CD4-positive, alpha-beta T cell (primary cell): ENCODE measurements at regions of chr11 and their contacts with region 1.

Region 1: DNA sequence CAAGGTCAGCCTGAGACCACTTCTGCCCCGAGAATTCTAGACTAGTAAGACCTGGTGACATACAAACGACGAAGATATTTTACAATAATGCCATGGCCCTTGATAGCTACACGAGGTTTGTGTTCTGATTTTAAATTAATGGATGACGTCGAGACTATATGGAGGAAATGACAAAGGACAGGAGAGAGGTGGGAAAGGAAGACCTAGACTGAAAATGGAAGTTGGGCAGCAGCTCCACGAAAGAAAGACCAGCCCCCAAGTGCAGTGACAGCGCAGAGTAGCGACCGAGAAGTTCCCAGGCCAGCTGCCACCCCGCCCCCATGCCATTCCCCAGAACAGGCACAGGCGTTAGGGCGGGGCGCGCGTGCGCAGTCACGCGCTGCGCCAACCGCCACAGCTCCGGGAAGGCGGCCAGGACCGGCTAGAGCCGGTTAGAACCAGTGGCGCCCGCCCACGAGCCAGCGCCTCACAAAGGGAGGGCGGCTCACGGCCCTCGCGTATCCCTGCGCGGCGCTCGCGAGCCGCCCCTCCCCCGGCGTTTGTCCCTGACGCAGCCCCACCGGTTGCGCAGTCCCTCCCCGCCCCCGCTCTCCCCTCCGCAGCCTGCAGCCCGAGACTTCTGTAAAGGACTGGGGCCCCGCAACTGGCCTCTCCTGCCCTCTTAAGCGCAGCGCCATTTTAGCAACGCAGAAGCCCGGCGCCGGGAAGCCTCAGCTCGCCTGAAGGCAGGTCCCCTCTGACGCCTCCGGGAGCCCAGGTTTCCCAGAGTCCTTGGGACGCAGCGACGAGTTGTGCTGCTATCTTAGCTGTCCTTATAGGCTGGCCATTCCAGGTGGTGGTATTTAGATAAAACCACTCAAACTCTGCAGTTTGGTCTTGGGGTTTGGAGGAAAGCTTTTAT is 1.5 kb upstream of the MALAT1 start:
- DNase-seq: peak; percentile 95 to 99 (median 98)
- ATAC-seq: peak; percentile 78
- H3K4me3 ChIP-seq: peak overlapping the region; percentile 73
- H3K4me3 Mint-ChIP-seq: no peak overlapping the region
- H3K27ac ChIP-seq: peak overlapping the region; percentile 96 to 99
- H3K27ac Mint-ChIP-seq: no peak overlapping the region
- H3K4me1 ChIP-seq: peaks cover 33% of the 10 kb centered on the region
- H3K4me1 Mint-ChIP-seq: peaks cover 28% of the 10 kb centered on the region
- H3K27me3 ChIP-seq: no peaks in the 10 kb centered on the region
- H3K27me3 Mint-ChIP-seq: no peaks in the 10 kb centered on the region
- CTCF ChIP-seq: no peak

Region 2: GRCh38 chr11:65134386-65135253 is 362.8 kb before region 1 on chr11 and contains the start of gene SYVN1:
- CTCF ChIA-PET with region 1: no interaction called
- POLR2A ChIA-PET with region 1: interaction called, 28 read pairs
- intact Hi-C with region 1: no loop called
- DNase-seq: peak; percentile 86 to 96 (median 90)
- ATAC-seq: peak; percentile 88
- H3K4me3 ChIP-seq: peak within 1 kb of the TSS; percentile 83
- H3K4me3 Mint-ChIP-seq: peak within 1 kb of the TSS; percentile 99
- H3K27ac ChIP-seq: peak within 1 kb of the TSS; percentile 96 to 99
- H3K27ac Mint-ChIP-seq: peak within 1 kb of the TSS; percentile 100
- H3K4me1 ChIP-seq: peaks cover 47% of the 10 kb centered on the region
- H3K4me1 Mint-ChIP-seq: peaks cover 45% of the 10 kb centered on the region
- H3K27me3 ChIP-seq: no peaks in the 10 kb centered on the region
- H3K27me3 Mint-ChIP-seq: no peaks in the 10 kb centered on the region
- CTCF ChIP-seq: no peak
- total RNA-seq, gene SYVN1: 89.1 to 96.8 TPM

Region 3: DNA sequence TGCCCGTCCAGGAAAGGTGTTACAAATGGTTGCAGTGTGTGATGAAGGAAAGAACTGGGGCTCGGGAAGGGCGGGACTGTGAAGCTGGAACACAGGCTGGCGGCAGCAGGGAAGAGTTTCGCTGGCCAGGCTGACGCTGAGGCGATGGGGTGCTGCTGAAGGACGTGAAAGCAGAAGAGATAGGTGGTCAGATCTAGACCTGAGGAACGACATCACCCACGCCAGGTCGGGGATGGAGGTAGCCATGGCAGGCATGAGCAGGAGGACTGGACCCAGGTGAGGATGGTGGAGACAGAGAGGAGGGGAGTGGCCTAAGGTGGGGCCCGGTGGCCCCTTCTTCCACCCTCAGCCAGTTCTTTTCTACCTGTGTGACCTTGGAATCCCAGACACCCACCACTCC is 173.6 kb before region 1 on chr11:
- CTCF ChIA-PET with region 1: no interaction called
- POLR2A ChIA-PET with region 1: no interaction called
- intact Hi-C with region 1: no loop called
- DNase-seq: no peak
- ATAC-seq: no peak
- H3K4me3 ChIP-seq: no peak overlapping the region
- H3K4me3 Mint-ChIP-seq: no peak overlapping the region
- H3K27ac ChIP-seq: no peak overlapping the region
- H3K27ac Mint-ChIP-seq: no peak overlapping the region
- H3K4me1 ChIP-seq: no peaks in the 10 kb centered on the region
- H3K4me1 Mint-ChIP-seq: no peaks in the 10 kb centered on the region
- H3K27me3 ChIP-seq: peaks cover 0 to 4% of the 10 kb centered on the region in 2 experiments
- H3K27me3 Mint-ChIP-seq: peaks cover 3% of the 10 kb centered on the region
- CTCF ChIP-seq: no peak

Region 4: DNA sequence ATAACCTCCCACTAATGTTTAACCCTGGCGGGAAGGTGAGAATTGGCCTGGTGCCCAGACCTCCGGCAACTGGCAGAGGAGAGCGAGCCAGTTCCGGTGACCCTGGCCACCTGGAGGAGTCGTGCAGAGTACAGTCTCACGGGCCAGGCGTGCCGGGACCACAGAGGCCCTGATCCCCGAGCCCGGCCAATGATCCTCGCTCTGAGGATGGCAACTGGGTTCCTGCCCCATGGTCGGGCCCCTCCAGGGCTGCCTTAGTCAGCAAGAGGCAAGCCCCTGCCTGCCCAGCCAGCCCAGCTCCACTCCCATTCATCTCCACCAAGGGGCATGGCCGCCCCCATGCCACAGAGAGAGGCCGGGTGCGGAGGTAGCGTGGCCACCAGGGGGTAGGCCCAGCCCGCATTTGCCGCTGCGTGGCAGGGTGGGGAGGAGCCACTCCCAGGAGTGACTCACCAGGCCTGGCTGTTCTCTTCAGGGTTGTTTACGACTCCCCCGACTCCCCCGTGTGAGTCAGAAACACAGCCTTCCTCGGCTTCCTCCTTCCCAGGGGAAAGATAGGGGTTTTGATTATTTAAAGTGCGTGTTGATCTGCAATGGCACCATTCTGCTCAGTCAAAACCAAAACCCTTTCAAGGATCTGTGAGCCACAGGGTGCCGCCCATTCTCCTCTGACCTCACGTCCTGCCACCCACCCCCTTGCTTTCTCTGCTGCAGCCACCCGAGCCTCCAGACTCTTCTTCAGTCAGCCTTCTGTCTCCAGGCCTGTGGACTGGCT is 115.2 kb before region 1 on chr11 and contains the start of gene SLC25A45:
- CTCF ChIA-PET with region 1: interaction called, 14 read pairs
- POLR2A ChIA-PET with region 1: interaction called, 350 read pairs
- intact Hi-C with region 1: no loop called
- DNase-seq: peak; percentile 84 to 96 (median 92)
- ATAC-seq: peak; percentile 83
- H3K4me3 ChIP-seq: peak within 1 kb of the TSS; percentile 76
- H3K4me3 Mint-ChIP-seq: peak within 1 kb of the TSS; percentile 86
- H3K27ac ChIP-seq: peak within 1 kb of the TSS; percentile 94 to 95
- H3K27ac Mint-ChIP-seq: peak within 1 kb of the TSS; percentile 98
- H3K4me1 ChIP-seq: peaks cover 74% of the 10 kb centered on the region
- H3K4me1 Mint-ChIP-seq: peaks cover 57% of the 10 kb centered on the region
- H3K27me3 ChIP-seq: no peaks in the 10 kb centered on the region
- H3K27me3 Mint-ChIP-seq: no peaks in the 10 kb centered on the region
- CTCF ChIP-seq: peak; percentile 81
- total RNA-seq, gene SLC25A45: 40.0 to 40.8 TPM

Region 5: DNA sequence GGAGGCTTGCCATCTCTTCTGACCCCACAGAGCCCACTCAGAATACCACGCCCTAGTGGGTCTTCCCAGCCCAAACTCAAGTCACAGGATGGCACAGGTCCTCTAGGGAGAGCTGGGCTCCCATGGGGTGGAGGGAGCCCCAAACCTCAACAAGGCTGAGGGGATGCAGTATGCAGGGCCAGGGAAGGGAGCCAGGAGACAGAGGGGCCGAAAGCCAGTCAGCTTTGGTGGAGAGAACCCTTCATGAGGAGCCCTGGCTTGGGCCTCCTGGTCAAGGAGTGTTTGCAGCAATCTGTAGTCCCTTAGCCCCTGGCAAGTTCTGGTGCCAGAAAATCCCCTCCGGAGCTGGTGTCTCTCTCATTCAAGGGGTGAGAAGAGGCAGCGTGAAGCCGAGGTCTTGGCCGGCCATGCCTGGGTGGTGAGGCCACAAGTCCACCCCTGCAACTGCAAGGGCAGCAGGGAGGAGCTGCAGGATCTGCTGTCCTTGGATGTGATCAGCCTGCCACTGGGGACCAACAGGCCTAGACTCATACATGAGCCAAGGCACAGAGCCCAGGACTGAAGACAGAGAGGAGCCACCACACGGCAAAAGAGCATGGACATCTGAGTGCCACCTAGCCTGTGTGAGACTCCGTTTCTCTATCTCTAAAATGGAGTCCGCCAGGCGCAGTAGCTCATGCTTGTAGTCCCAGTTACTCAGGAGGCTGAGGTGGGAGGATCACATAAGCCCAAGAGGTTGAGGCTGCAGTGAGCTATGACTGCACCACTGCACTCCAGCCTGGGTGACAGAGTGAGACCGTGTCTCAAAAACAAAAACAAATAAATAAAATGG is 50.7 kb before region 1 on chr11:
- CTCF ChIA-PET with region 1: no interaction called
- POLR2A ChIA-PET with region 1: interaction called, 25 read pairs
- intact Hi-C with region 1: no loop called
- DNase-seq: peak in 3 of 14 experiments; percentile 16 to 36 (median 27)
- ATAC-seq: no peak
- H3K4me3 ChIP-seq: no peak overlapping the region
- H3K4me3 Mint-ChIP-seq: no peak overlapping the region
- H3K27ac ChIP-seq: no peak overlapping the region
- H3K27ac Mint-ChIP-seq: peak overlapping the region; percentile 39
- H3K4me1 ChIP-seq: peaks cover 15% of the 10 kb centered on the region
- H3K4me1 Mint-ChIP-seq: peaks cover 15% of the 10 kb centered on the region
- H3K27me3 ChIP-seq: no peaks in the 10 kb centered on the region
- H3K27me3 Mint-ChIP-seq: no peaks in the 10 kb centered on the region
- CTCF ChIP-seq: no peak

Region 6: GRCh38 chr11:65524741-65525545 is 27.6 kb after region 1 on chr11 and contains the start of gene SCYL1:
- CTCF ChIA-PET with region 1: no interaction called
- POLR2A ChIA-PET with region 1: interaction called, 106 read pairs
- intact Hi-C with region 1: no loop called
- DNase-seq: peak; percentile 72 to 91 (median 81)
- ATAC-seq: peak; percentile 79
- H3K4me3 ChIP-seq: peak within 1 kb of the TSS; percentile 75
- H3K4me3 Mint-ChIP-seq: peak within 1 kb of the TSS; percentile 88
- H3K27ac ChIP-seq: peak within 1 kb of the TSS; percentile 60 to 84
- H3K27ac Mint-ChIP-seq: peak within 1 kb of the TSS; percentile 91
- H3K4me1 ChIP-seq: peaks cover 65% of the 10 kb centered on the region
- H3K4me1 Mint-ChIP-seq: peaks cover 58% of the 10 kb centered on the region
- H3K27me3 ChIP-seq: no peaks in the 10 kb centered on the region
- H3K27me3 Mint-ChIP-seq: no peaks in the 10 kb centered on the region
- CTCF ChIP-seq: no peak
- total RNA-seq, gene SCYL1: 57.4 to 60.7 TPM

Region 7: GRCh38 chr11:65652511-65653231 is 155.3 kb after region 1 on chr11:
- CTCF ChIA-PET with region 1: no interaction called
- POLR2A ChIA-PET with region 1: interaction called, 12 read pairs
- intact Hi-C with region 1: no loop called
- DNase-seq: peak; percentile 92 to 99 (median 96)
- ATAC-seq: peak; percentile 75
- H3K4me3 ChIP-seq: peak overlapping the region; percentile 66
- H3K4me3 Mint-ChIP-seq: peak overlapping the region; percentile 88
- H3K27ac ChIP-seq: peak overlapping the region; percentile 95 to 99
- H3K27ac Mint-ChIP-seq: peak overlapping the region; percentile 97
- H3K4me1 ChIP-seq: peaks cover 60% of the 10 kb centered on the region
- H3K4me1 Mint-ChIP-seq: peaks cover 54% of the 10 kb centered on the region
- H3K27me3 ChIP-seq: no peaks in the 10 kb centered on the region
- H3K27me3 Mint-ChIP-seq: no peaks in the 10 kb centered on the region
- CTCF ChIP-seq: no peak

Region 8: DNA sequence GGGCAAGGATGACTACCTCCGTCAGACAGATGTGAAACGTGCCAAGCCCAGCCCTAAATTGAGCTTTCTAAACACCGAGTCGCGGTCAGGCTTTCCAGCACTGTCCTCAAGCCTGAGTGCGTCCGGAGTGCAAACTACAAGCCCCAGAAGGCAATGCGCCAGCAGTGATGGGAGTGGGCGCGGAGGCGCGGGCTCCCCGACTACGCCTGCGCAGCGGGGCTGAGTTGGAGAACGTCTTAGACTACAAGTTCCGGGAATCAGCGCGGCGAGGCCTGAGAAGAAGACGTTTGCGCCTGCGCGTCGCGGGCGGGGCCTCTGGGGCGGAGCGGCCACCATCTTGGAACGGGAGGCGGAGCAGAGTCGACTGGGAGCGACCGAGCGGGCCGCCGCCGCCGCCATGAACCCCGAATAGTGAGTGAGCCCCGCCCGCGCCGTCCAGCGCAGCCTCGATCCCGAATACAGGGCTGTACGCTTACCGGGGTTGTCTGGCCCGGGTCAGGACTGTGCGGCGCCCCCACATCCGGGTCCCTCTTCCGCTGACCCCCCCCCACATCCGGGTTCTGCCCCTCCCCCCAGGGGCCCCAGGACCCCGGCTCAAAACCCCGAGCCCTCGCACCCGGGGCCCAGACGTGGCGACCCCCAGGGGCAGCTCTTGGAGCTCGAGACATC is 771.0 kb after region 1 on chr11 and contains the start of gene RAB1B:
- CTCF ChIA-PET with region 1: no interaction called
- POLR2A ChIA-PET with region 1: no interaction called
- intact Hi-C with region 1: no loop called
- DNase-seq: peak; percentile 99 to 100 (median 100)
- ATAC-seq: peak; percentile 82
- H3K4me3 ChIP-seq: peak within 1 kb of the TSS; percentile 99
- H3K4me3 Mint-ChIP-seq: peak within 1 kb of the TSS; percentile 96
- H3K27ac ChIP-seq: peak within 1 kb of the TSS; percentile 83 to 87
- H3K27ac Mint-ChIP-seq: peak within 1 kb of the TSS; percentile 100
- H3K4me1 ChIP-seq: peaks cover 58% of the 10 kb centered on the region
- H3K4me1 Mint-ChIP-seq: peaks cover 45% of the 10 kb centered on the region
- H3K27me3 ChIP-seq: no peaks in the 10 kb centered on the region
- H3K27me3 Mint-ChIP-seq: no peaks in the 10 kb centered on the region
- CTCF ChIP-seq: no peak
- total RNA-seq, gene RAB1B: 27.4 to 29.4 TPM